Mammary epithelial cell (primary cell): ENCODE measurements at regions of chr11 and their contacts with region 1.

Region 1: GRCh38 chr11:2825889-2826678 is 59.5 kb downstream of the CDKN1C start:
- DNase-seq: peak; percentile 89
- H3K4me3 ChIP-seq: peak overlapping the region in 2 of 3 experiments; percentile 17 to 28
- H3K27ac ChIP-seq: peak overlapping the region; percentile 63
- H3K4me1 ChIP-seq: peaks cover 21% of the 10 kb centered on the region
- H3K27me3 ChIP-seq: no peaks in the 10 kb centered on the region
- CTCF ChIP-seq: no peak

Region 2: GRCh38 chr11:2474061-2474901 is 351.8 kb before region 1 on chr11:
- CTCF ChIA-PET with region 1: no interaction called
- dilution Hi-C with region 1: no loop called
- in situ Hi-C with region 1: no loop called
- intact Hi-C with region 1: no loop called
- DNase-seq: no peak
- H3K4me3 ChIP-seq: no peak overlapping the region
- H3K27ac ChIP-seq: no peak overlapping the region
- H3K4me1 ChIP-seq: no peaks in the 10 kb centered on the region
- H3K27me3 ChIP-seq: no peaks in the 10 kb centered on the region
- CTCF ChIP-seq: no peak

Region 3: DNA sequence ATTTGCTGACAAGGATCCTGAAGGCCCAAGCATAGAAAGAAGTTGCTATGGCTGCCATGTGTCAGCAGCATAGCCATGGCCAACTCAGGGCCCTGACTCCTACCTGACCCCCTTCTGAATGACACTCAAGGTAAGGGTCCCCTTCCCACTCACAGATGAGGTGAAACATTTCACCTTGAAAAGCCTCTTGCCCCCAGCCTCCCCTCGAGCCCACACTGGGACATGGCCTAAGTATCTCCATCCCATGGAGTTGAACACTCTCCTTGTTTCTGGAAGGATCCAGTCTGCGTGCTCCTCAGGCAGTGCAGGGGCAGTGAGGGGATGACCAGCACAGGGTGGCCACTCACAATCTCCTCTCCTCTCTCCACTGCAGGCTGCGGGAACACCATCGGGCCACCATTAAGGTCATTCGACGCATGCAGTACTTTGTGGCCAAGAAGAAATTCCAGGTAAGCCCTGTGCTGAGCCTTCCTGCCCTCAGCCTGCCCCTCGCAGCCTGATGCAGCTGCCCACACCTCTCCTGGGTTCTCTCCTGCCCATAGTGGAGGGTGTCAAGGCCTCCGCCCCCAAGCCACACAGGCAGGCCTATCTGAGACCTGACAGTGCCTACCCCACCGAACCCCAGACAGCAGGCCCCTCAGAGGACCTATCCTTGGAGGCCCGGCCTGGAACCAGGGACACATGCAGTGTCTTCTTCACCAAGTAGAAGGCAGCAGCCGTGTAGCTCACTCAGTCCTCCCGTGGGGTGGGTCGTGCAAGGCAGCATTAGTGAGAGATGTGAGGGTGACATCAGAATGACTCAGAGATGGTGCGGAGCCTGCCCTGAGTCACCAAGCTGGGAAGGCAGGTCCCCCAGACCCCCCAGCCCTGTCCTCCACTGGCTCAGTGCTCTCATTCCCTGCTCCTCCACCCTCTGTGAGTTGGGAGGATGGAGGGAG is 57.3 kb before region 1 on chr11:
- CTCF ChIA-PET with region 1: no interaction called
- dilution Hi-C with region 1: loop called (anchors 5 kb)
- in situ Hi-C with region 1: no loop called
- intact Hi-C with region 1: no loop called
- DNase-seq: peak; percentile 47
- H3K4me3 ChIP-seq: no peak overlapping the region
- H3K27ac ChIP-seq: no peak overlapping the region
- H3K4me1 ChIP-seq: peaks cover 5% of the 10 kb centered on the region
- H3K27me3 ChIP-seq: peaks cover 27% of the 10 kb centered on the region
- CTCF ChIP-seq: no peak

Region 4: DNA sequence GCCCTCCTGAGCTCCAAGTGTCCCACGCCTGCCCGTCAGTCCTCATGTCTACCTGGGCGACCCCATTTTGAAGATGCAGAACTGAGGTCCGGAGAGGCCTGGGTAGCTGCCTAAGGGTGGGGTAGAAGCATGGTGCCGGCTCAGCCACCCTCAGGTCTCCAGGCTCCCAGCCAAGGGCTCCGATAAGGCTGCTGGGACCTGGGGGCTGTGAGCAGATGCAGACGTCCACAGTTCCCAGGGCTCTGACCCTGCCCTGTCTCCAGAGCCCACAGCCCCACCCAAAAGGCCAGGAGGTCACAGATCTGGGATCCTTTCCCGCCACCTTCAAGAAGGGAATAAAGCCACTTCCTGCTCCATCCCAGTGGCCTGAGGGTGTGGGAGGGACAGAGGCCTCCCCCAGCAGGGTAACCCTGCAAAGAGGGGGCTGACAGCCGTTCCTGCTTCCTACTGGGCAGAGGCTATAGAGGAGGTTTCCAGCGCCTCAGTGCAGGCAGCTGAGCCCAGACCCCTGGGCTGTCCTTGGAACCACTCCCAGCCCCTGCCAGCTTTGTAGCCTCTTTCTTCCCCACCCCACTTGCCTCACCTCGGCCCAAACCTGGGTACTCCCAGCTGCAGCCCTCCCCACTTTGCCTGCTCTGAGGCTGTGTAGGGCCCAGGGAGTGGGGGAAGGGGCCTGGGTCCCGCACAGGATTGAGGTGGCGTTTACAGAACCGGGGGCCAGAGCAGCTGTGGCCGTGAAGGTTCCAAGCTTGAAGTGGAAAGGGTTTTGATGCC is 26.0 kb before region 1 on chr11:
- CTCF ChIA-PET with region 1: interaction called, 10 read pairs
- dilution Hi-C with region 1: no loop called
- in situ Hi-C with region 1: no loop called
- intact Hi-C with region 1: no loop called
- DNase-seq: no peak
- H3K4me3 ChIP-seq: no peak overlapping the region
- H3K27ac ChIP-seq: no peak overlapping the region
- H3K4me1 ChIP-seq: peaks cover 18% of the 10 kb centered on the region
- H3K27me3 ChIP-seq: peaks cover 3% of the 10 kb centered on the region
- CTCF ChIP-seq: no peak